Mammary epithelial cell (primary cell): ENCODE measurements at regions of chr2 and their contacts with region 1.

Region 1: DNA sequence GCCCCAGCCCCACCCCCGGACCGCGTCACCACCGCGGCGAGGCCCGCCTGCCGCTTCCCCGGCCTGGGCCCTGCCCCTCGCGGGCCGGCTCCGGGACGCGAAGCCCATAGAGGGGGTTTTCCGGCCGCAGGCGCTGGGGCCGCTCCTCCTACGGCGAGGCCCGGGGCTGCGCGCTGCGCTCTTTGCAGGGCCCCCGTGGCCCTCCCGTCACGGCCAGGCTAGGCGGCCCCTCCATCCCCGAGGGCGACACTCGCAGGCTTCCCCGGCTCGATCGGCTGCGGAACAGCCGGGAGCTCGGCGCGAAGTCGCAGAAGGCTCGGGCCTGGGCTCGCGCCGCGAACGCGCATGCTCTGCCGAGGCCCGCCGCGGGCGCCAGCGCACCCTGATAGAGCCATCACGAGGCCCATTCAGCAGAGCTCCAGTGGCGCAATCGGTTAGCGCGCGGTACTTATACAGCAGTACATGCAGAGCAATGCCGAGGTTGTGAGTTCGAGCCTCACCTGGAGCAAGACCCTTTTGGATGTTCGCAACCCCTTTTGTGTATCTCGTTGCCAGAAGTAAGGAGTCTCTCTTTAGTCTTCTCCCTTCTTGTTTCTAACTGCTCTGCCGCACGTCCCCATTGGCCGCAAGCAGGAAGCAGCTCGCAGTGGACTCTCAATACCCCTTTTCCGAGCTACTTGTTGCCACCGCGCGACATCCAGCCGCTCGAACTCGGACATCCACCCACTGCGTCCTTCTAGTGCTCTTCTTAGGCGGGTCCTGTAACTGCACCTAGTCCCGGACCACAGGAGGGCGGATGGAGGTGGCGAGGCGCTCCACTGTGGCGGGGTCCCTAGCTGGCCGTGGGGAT is 18.0 kb upstream of the HAAO start:
- DNase-seq: peak; percentile 95
- H3K4me3 ChIP-seq: peak overlapping the region; percentile 50 to 70 (median 66)
- H3K27ac ChIP-seq: peak overlapping the region; percentile 87
- H3K4me1 ChIP-seq: peaks cover 16% of the 10 kb centered on the region
- H3K27me3 ChIP-seq: no peaks in the 10 kb centered on the region
- CTCF ChIP-seq: peak in 1 of 2 donors; percentile 8

Region 2: GRCh38 chr2:42494355-42495233 is 315.8 kb before region 1 on chr2:
- CTCF ChIA-PET with region 1: no interaction called
- dilution Hi-C with region 1: no loop called
- in situ Hi-C with region 1: no loop called
- intact Hi-C with region 1: loop called (anchors 5 kb)
- DNase-seq: peak; percentile 87
- H3K4me3 ChIP-seq: peak overlapping the region; percentile 49 to 62 (median 50)
- H3K27ac ChIP-seq: no peak overlapping the region
- H3K4me1 ChIP-seq: peaks cover 13% of the 10 kb centered on the region
- H3K27me3 ChIP-seq: peaks cover 29% of the 10 kb centered on the region
- CTCF ChIP-seq: peak; percentile 87 to 91

Region 3: GRCh38 chr2:42874949-42875801 is 64.8 kb after region 1 on chr2:
- CTCF ChIA-PET with region 1: interaction called, 31 read pairs
- dilution Hi-C with region 1: no loop called
- in situ Hi-C with region 1: no loop called
- intact Hi-C with region 1: no loop called
- DNase-seq: no peak
- H3K4me3 ChIP-seq: no peak overlapping the region
- H3K27ac ChIP-seq: no peak overlapping the region
- H3K4me1 ChIP-seq: peaks cover 19% of the 10 kb centered on the region
- H3K27me3 ChIP-seq: no peaks in the 10 kb centered on the region
- CTCF ChIP-seq: no peak

Region 4: DNA sequence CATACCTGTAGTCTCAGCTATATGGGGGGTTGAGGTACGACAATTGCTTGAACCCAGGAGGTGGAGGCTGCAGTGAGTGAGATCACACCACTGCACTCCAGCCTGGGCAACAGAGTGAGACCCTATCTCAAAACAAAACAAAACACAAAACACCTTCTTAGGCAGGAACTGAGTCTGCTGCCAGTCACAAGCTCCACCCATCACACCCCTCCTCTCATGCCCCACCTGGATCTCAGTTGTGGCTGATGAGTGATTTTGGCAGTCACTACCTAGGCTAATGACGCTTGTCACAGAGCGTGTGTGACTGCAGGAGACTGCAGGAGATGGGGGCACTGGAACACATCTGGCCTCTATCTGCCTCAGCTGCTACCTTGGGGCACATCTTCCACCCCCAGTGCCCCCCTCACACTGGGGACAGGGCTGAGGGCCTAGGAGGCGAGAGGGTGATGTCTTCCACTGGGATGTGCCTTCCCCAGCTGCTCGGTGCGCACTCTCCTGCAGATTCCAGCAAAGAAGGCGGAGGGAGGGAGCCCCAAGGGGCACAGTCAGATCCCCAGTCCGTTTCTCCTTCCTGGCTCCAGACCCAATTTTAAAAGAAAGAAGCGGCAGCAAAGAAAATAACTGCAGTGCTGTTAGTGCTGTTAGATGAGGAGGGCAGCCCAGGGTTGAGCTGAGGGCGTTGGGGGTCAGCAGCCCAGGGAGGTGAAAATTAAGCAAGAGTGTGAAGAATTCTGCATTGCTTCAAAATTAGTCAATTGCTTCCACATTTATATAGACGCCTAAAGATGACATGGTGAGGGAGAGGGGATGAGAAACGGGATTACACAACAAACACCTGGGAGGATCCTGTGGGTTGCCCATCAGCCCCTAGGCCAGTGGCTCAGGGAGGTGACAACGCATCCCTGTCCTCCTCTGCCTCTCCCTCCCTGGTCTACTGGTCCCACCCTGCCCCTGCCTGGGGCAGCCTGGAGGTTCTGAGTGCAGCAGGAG is 125.6 kb after region 1 on chr2:
- CTCF ChIA-PET with region 1: no interaction called
- dilution Hi-C with region 1: no loop called
- in situ Hi-C with region 1: no loop called
- intact Hi-C with region 1: no loop called
- DNase-seq: no peak
- H3K4me3 ChIP-seq: no peak overlapping the region
- H3K27ac ChIP-seq: no peak overlapping the region
- H3K4me1 ChIP-seq: peaks cover 45% of the 10 kb centered on the region
- H3K27me3 ChIP-seq: no peaks in the 10 kb centered on the region
- CTCF ChIP-seq: no peak